ENCODE measurements at regions of chr1 and their contacts with region 1.

Region 1: DNA sequence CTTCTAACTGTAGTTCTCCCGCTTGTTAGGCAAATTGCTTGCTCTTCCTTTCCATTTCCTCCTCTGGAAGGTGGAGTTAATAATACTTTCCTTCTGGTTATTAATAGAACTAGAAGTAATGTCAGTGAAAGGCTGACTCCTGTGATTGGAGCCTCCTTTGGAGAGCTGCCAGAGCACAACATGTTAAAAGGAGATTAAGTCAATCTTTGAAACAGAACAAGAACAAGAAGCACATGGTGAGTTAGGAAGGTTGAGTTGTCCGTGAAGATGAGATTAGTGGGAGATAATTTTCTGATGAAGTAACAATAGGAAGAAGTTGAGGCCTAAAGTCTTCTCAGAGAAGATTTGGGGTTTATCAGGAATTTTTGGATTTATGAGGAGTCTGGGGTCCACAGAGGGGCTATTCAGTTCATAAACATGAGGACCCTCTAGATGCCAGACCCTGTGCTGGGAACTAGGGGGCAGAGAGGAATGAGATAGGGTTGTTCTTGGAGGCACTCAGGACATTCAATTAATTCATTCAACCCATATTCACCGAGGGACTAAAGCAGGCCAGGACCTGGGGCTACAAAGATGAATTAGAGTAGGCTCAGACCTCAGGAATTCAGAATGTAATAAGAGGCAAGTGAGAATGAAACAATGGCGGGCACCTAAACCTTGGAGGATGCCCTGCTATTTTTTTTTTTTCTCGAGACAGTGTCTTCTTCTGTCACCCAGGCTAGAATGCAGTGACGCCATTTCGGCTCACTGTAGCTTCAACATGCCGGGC is 40.7 kb upstream of the DHCR24 start:
- DNase-seq: peak; percentile 21 to 52
- H3K4me3 ChIP-seq: no peak overlapping the region
- CTCF ChIP-seq: no peak
- POLR2A ChIP-seq: no peak

Region 2: GRCh38 chr1:54810100-54810942 is 117.3 kb before region 1 on chr1:
- intact Hi-C with region 1: loop called (anchors 10 kb)
- DNase-seq: peak in 1 of 2 donors; percentile 87
- H3K4me3 ChIP-seq: no peak overlapping the region
- CTCF ChIP-seq: no peak
- POLR2A ChIP-seq: no peak